CD14-positive monocyte (primary cell): ENCODE measurements at regions of chr16 and their contacts with region 1.

Region 1: GRCh38 chr16:53111078-53111791 is 56.4 kb downstream of the CHD9 start:
- DNase-seq: no peak
- H3K4me3 ChIP-seq: no peak overlapping the region
- H3K4me3 Mint-ChIP-seq: no peak overlapping the region
- H3K27ac ChIP-seq: no peak overlapping the region
- H3K27ac Mint-ChIP-seq: no peak overlapping the region
- H3K4me1 ChIP-seq: no peaks in the 10 kb centered on the region
- H3K4me1 Mint-ChIP-seq: no peaks in the 10 kb centered on the region
- H3K27me3 ChIP-seq: no peaks in the 10 kb centered on the region
- H3K27me3 Mint-ChIP-seq: peaks cover 0 to 4% (median 3%) of the 10 kb centered on the region in 3 donors
- CTCF ChIP-seq: no peak

Region 2: DNA sequence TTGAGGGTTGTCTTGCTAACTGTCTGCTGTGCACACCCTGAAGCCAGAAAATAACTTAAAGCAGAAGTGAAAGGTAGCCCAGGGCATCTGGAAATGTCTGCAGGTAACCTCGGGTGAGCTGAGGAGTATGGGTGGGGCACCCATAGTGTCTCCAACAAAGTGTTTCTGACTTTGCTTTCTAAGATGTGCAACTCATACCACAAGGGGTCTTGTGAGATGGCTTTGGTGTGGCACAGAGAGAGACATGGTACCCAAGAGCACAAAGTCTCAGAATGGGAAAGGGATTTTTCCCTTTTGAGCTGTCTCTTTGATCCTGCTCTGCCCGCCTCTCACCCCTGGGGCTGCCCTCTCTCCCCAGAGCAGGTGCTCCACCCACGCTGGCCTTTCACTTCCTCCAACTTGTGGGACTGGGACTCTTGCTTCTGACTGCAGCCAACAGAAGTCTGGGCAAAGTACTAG is 49.5 kb before region 1 on chr16:
- intact Hi-C with region 1: loop called in 1 of 2 experiments (anchors 10 kb)
- DNase-seq: peak; percentile 32 to 53 (median 38)
- H3K4me3 ChIP-seq: peak overlapping the region in 1 of 3 experiments; percentile 29
- H3K4me3 Mint-ChIP-seq: peak overlapping the region; percentile 34 to 48
- H3K27ac ChIP-seq: peak overlapping the region in 1 of 2 donors; percentile 59
- H3K27ac Mint-ChIP-seq: peak overlapping the region in 1 of 7 donors; percentile 23
- H3K4me1 ChIP-seq: peaks cover 19 to 21% of the 10 kb centered on the region in 2 donors
- H3K4me1 Mint-ChIP-seq: peaks cover 44% of the 10 kb centered on the region
- H3K27me3 ChIP-seq: no peaks in the 10 kb centered on the region
- H3K27me3 Mint-ChIP-seq: no peaks in the 10 kb centered on the region
- CTCF ChIP-seq: no peak

Region 3: GRCh38 chr16:53078765-53079485 is 32.3 kb before region 1 on chr16:
- intact Hi-C with region 1: no loop called
- DNase-seq: no peak
- H3K4me3 ChIP-seq: no peak overlapping the region
- H3K4me3 Mint-ChIP-seq: no peak overlapping the region
- H3K27ac ChIP-seq: no peak overlapping the region
- H3K27ac Mint-ChIP-seq: peak overlapping the region in 1 of 7 donors; percentile 37
- H3K4me1 ChIP-seq: no peaks in the 10 kb centered on the region
- H3K4me1 Mint-ChIP-seq: peaks cover 6% of the 10 kb centered on the region
- H3K27me3 ChIP-seq: no peaks in the 10 kb centered on the region
- H3K27me3 Mint-ChIP-seq: no peaks in the 10 kb centered on the region
- CTCF ChIP-seq: no peak

Region 4: DNA sequence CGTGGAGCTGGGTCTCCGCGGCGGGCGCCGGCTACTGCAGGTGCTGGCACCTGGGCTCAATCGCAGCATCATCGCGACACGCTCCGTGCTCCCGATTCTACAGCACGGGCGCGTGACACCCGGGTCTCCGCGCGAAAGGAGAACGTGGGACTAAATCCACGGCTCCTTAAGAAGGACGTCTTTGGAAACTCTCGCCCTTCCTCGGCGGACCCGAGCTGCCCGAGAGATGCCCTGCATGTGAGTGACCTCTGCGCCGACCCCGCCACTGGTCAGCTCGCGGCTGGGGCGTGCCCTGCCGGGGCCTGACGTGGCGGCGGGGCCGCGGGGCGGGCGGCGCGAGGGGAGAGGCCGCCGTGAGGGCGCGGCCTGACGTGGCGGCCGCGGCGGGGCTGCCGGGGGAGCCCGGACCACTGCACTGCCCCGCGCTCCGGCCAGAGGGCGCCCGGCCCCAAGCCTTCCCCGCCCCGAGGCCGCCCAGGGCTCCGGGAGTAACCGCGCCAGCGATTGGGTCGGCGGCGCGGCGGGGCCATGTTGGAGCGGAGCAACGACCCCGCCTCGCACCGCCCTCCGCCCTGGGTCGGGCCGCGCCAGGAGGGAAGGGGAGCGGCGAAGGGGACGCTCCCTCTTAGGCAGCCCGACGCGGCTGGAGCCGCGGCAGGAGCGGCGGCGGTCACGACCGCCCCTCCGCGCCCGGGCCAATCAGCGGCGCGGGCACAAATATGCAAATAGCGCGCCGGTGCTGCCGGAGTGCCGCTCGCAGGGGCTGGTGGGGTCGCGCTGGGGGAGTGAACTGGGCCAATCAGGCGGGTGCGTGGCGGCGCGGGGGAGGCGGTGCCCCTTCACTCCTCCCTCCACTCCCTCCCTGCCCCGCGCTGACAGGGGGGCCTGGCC is 19.2 kb after region 1 on chr16:
- intact Hi-C with region 1: no loop called
- DNase-seq: peak; percentile 90 to 92 (median 92)
- H3K4me3 ChIP-seq: peak overlapping the region; percentile 82 to 90 (median 89)
- H3K4me3 Mint-ChIP-seq: peak overlapping the region; percentile 87 to 91
- H3K27ac ChIP-seq: peak overlapping the region; percentile 82 to 93
- H3K27ac Mint-ChIP-seq: peak overlapping the region; percentile 71 to 93 (median 89)
- H3K4me1 ChIP-seq: peaks cover 9 to 25% of the 10 kb centered on the region in 2 donors
- H3K4me1 Mint-ChIP-seq: peaks cover 22% of the 10 kb centered on the region
- H3K27me3 ChIP-seq: no peaks in the 10 kb centered on the region
- H3K27me3 Mint-ChIP-seq: no peaks in the 10 kb centered on the region
- CTCF ChIP-seq: peak; percentile 74